H1 (cell line): ENCODE measurements at regions of chr10 and their contacts with region 1.

Region 1: DNA sequence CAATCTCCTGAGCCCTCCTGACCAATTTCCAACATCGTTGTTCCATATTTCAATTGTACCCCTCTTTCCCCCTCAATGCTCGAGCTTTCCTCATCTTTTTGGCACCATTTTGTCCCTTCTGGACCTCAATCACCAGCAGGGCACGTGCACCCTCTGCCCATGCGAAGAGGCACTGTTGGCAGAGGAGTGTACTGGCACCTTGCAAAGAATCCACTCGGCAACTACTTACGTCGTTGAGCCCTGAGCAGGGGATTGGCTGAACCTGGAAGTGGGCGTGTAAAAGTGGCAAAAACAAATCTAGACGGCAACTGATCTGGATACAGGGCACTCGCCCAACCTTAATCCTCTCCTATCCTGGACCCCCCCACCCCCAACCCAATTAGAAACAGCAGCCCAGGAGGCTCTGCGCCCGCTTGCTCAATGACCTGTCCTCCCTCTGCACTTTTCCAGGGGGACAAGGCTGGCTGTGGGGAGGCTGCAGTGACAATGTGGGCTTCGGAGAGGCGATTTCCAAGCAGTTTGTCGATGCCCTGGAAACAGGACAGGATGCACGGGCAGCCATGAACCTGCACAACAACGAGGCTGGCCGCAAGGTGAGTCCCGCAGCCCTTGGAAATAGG is 18.8 kb downstream of the WNT8B start:
- DNase-seq: peak; percentile 77 to 97
- H3K4me3 ChIP-seq: peak overlapping the region; percentile 35 to 59 (median 53)
- H3K27ac ChIP-seq: no peak overlapping the region
- H3K4me1 ChIP-seq: peaks cover 11 to 26% (median 19%) of the 10 kb centered on the region in 4 experiments
- H3K27me3 ChIP-seq: peaks cover 59 to 77% (median 70%) of the 10 kb centered on the region in 4 experiments
- CTCF ChIP-seq: peak in 2 of 3 experiments; percentile 4 to 7; a peak in 1 of 4 replicates
- EP300 ChIP-seq: no peak
- POLR2A ChIP-seq: no peak
- RAD21 ChIP-seq: 0 out of 4 replicates have a peak, but pooled peaks of 1 of the 2 experiments have one; percentile 4

Region 2: DNA sequence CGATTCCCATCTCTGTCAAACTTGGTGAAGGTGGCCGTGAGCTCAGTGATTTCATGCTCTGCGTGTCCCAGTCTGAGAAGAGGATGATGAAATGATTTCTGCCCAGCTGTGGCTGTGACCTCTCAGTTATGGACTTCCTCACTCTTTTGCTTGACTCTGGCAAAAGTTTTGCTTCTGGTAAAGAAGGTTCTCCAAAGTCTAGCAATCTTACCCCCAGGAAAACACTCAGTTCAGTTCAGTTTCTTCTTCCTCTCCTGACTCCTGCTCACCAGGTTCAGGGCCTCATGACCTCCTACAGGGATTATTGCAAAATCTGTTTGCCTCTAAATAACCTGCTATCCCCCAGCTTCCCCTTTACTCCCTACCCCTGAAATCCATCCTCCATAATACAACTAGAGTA is 190.2 kb before region 1 on chr10:
- CTCF ChIA-PET with region 1: no interaction called
- POLR2A ChIA-PET with region 1: no interaction called
- DNase-seq: no peak
- H3K4me3 ChIP-seq: no peak overlapping the region
- H3K27ac ChIP-seq: no peak overlapping the region
- H3K4me1 ChIP-seq: peaks cover 0 to 5% (median 2%) of the 10 kb centered on the region in 4 experiments; a peak in 3 of 7 replicates
- H3K27me3 ChIP-seq: no peaks in the 10 kb centered on the region
- CTCF ChIP-seq: no peak
- EP300 ChIP-seq: no peak
- POLR2A ChIP-seq: no peak
- RAD21 ChIP-seq: no peak

Region 3: DNA sequence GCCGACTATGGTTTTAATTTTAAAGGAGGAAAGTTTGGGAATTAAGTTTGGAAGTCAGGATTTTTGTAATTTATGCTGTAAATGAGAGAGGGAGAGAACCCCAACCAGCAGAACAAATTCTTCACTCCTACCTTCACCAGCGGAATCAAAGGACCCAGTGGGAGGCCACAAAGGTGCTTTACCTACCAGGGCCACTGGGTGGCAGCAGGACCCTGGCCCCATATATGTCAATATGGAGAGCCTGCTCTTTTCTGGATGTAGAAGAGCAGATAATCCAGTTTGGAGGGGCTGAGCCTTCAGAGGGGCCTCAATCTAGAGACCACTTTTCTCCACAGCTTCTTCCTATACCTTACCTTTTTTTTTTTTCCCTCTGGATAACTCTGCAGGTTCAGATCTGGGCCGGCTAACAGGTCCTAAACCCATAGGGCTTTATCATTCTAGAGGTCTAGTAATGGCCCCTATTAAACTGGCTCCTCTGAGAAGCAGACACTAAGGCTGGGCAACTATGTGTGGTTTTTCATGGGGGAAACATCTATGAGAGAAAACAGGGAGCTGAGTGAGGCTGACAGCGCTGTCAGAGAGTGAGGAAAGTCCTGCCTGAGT is 143.0 kb before region 1 on chr10:
- CTCF ChIA-PET with region 1: interaction called, 17 read pairs
- POLR2A ChIA-PET with region 1: interaction called, 4 read pairs
- DNase-seq: peak in 1 of 2 experiments; percentile 92
- H3K4me3 ChIP-seq: no peak overlapping the region
- H3K27ac ChIP-seq: no peak overlapping the region
- H3K4me1 ChIP-seq: peaks cover 3 to 15% (median 5%) of the 10 kb centered on the region in 4 experiments; a peak in 4 of 7 replicates
- H3K27me3 ChIP-seq: no peaks in the 10 kb centered on the region; a peak in 3 of 7 replicates
- CTCF ChIP-seq: peak; percentile 81 to 88 (median 87)
- EP300 ChIP-seq: no peak
- POLR2A ChIP-seq: no peak
- RAD21 ChIP-seq: peak; percentile 87 to 89

Region 4: DNA sequence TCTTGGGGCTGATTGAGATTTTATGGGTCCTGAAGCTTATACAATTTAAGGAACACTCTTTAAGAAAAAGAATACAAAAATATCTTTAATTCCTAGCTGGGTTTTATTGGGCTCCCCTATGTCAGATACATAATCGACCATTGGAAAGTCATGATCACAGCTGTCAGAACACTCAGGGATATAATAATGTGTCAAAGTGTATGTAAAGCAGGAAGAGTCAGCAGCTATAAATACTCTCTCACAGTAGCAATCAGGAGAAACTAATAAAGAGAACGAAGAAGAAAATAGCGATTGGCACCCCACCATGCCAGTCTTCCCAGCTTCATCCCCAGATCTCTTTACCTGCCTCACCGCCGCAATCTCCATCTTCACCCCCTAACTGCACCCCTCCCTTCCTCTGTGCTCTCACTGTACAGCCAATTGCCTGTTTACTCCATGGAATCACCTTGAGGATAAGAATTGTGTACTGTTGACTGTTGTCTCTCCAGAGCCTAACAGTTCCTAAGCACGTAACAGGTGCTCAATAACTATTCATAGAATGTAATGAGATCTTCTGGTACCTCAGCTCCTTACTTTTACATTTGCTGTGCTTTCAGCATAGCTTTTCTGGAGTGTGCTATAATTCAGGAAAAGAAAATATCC is 42.8 kb before region 1 on chr10:
- CTCF ChIA-PET with region 1: interaction called, 19 read pairs
- POLR2A ChIA-PET with region 1: no interaction called
- DNase-seq: no peak
- H3K4me3 ChIP-seq: no peak overlapping the region
- H3K27ac ChIP-seq: no peak overlapping the region
- H3K4me1 ChIP-seq: no peaks in the 10 kb centered on the region
- H3K27me3 ChIP-seq: no peaks in the 10 kb centered on the region
- CTCF ChIP-seq: no peak
- EP300 ChIP-seq: no peak
- POLR2A ChIP-seq: no peak
- RAD21 ChIP-seq: no peak

Region 5: DNA sequence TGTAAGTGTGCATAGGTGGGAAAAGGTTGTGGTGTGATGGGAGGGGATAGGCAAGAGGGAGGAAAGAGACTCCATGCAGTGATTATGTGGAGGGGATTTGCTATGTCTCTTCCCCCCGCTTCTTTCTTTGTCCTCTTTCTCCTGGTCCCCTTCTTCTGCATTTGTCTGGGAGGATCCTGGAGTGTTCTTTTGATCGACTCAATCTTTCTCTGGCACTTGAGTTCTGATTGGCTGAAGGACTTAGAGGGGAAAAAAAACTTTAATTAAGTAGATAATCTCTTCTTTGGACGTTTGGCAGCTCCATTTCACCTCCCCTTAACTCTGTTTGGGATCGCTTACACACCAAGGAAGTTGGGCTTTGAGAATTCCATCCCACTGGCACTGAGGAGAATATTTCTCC is 18.9 kb before region 1 on chr10 and contains the start of gene WNT8B:
- CTCF ChIA-PET with region 1: interaction called, 13 read pairs
- POLR2A ChIA-PET with region 1: no interaction called
- DNase-seq: no peak
- H3K4me3 ChIP-seq: no peak within 1 kb of the TSS
- H3K27ac ChIP-seq: no peak within 1 kb of the TSS
- H3K4me1 ChIP-seq: 0 out of 7 replicates have a peak, but pooled peaks cover 0 to 3% (median 0%) of the 10 kb centered on the region in 4 experiments
- H3K27me3 ChIP-seq: no peaks in the 10 kb centered on the region; a peak in 1 of 7 replicates
- CTCF ChIP-seq: no peak
- EP300 ChIP-seq: no peak
- POLR2A ChIP-seq: no peak
- RAD21 ChIP-seq: no peak
- total RNA-seq, gene WNT8B: 0.34 and 0.67 TPM in 2 replicates

Region 6: DNA sequence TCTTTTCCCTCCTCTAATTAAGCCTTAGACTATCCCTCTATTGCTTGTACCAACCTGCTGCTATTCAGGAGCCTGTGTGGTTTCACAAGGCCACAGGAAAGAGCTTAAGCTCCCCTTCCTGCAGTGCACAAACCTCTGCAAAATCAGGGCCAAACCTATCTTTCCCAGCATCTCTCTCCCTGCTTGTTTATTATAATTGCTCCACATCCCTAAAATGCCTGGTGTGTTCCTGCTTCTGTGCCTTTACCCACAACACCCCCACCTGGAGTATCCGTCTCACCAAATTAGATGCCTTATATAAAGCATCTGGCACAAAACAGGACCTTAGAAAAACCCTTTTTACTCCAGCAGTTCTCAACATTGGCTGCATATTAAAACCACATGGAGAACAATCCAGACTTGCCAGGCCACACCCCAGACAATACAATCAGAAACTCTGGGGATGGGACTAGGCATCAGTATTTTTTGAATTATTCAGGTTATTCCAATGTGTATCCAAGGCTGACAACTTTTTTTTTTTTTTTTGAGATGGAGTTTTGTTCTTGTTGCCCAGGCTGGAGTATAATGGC is 21.4 kb after region 1 on chr10:
- CTCF ChIA-PET with region 1: interaction called, 163 read pairs
- POLR2A ChIA-PET with region 1: interaction called, 9 read pairs
- DNase-seq: no peak
- H3K4me3 ChIP-seq: no peak overlapping the region
- H3K27ac ChIP-seq: no peak overlapping the region
- H3K4me1 ChIP-seq: no peaks in the 10 kb centered on the region; a peak in 1 of 7 replicates
- H3K27me3 ChIP-seq: peaks cover 0 to 24% (median 4%) of the 10 kb centered on the region in 4 experiments; a peak in 3 of 7 replicates
- CTCF ChIP-seq: no peak
- EP300 ChIP-seq: no peak
- POLR2A ChIP-seq: no peak
- RAD21 ChIP-seq: no peak

Region 7: GRCh38 chr10:100653957-100654781 is 172.6 kb after region 1 on chr10:
- CTCF ChIA-PET with region 1: no interaction called
- POLR2A ChIA-PET with region 1: no interaction called
- DNase-seq: peak in 1 of 2 experiments; percentile 66
- H3K4me3 ChIP-seq: peak overlapping the region; percentile 49 to 68 (median 50)
- H3K27ac ChIP-seq: no peak overlapping the region
- H3K4me1 ChIP-seq: peaks cover 0 to 15% (median 11%) of the 10 kb centered on the region in 4 experiments; a peak in 6 of 7 replicates
- H3K27me3 ChIP-seq: peaks cover 38 to 69% (median 65%) of the 10 kb centered on the region in 4 experiments
- CTCF ChIP-seq: no peak
- EP300 ChIP-seq: no peak
- POLR2A ChIP-seq: no peak
- RAD21 ChIP-seq: no peak